Heart right ventricle (tissue), 16 donors: ENCODE measurements at regions of chr15 and their contacts with region 1.

Region 1: DNA sequence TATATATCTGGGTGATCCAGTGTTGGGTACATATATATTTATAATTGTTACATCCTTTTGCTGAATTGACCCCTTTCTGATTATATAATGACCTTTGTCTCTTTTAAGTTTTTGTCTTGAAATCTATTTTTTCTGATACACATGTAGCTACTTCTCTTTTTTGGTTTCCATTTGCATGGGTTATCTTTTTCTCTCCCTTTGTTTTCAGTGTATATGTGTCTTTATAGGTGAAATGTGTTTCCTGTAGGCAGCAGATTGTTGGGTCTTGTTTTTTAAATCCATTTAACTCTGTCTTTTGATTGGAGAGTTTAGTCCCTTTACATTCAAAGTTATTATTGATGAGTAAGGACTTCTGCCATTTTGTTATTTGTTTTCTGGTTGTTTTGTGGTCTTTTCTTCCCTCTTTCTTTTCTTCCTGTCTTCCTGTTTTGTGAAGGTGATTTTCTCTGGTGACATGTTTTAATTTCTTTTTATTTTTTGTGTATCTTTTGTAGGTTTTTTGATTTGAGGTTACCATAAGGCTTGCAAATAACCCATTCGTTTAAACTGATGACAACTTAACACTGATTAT is 56.8 kb downstream of the STARD9 start:
- DNase-seq: no peak
- ATAC-seq: no peak
- H3K4me3 ChIP-seq: no peak overlapping the region
- H3K27ac ChIP-seq: no peak overlapping the region
- H3K4me1 ChIP-seq: no peaks in the 10 kb centered on the region
- H3K27me3 ChIP-seq: no peaks in the 10 kb centered on the region
- CTCF ChIP-seq: no peak

Region 2: GRCh38 chr15:44441095-44441501 is 1808.9 kb after region 1 on chr15:
- intact Hi-C with region 1: loop called in 1 of 10 experiments (anchors 10 kb)
- DNase-seq: no peak
- ATAC-seq: peak in 1 of 8 donors; percentile 15
- H3K4me3 ChIP-seq: no peak overlapping the region
- H3K27ac ChIP-seq: no peak overlapping the region
- H3K4me1 ChIP-seq: peaks cover 0 to 49% (median 19%) of the 10 kb centered on the region in 9 donors
- H3K27me3 ChIP-seq: no peaks in the 10 kb centered on the region
- CTCF ChIP-seq: no peak